Mammary epithelial cell (primary cell): ENCODE measurements at regions of chr18 and their contacts with region 1.

Region 1: DNA sequence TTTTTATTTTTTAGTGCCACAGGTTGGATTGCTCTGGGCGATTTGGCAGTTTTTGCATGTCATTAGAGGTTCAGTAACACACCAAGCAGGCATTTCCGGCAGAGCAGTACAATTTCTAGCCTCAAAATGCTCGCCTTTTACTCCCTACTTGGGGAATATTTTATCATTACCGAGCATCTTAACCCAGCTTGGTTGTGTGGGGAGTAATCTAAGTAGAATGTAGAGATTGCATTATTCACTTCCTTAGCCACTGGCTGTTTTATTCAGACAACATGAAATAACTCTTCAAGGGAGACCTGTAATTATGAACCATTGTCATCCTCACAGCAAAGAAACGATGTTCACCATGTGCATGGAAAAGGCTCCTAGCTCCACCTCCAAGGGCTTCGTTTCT is 13.1 kb downstream of the GRP start:
- DNase-seq: peak; percentile 75
- H3K4me3 ChIP-seq: no peak overlapping the region
- H3K27ac ChIP-seq: no peak overlapping the region
- H3K4me1 ChIP-seq: peaks cover 33% of the 10 kb centered on the region
- H3K27me3 ChIP-seq: no peaks in the 10 kb centered on the region
- CTCF ChIP-seq: no peak

Region 2: GRCh38 chr18:58953627-58954026 is 279.4 kb before region 1 on chr18:
- CTCF ChIA-PET with region 1: no interaction called
- dilution Hi-C with region 1: no loop called
- in situ Hi-C with region 1: no loop called
- intact Hi-C with region 1: no loop called
- DNase-seq: no peak
- H3K4me3 ChIP-seq: no peak overlapping the region
- H3K27ac ChIP-seq: no peak overlapping the region
- H3K4me1 ChIP-seq: peaks cover 3% of the 10 kb centered on the region
- H3K27me3 ChIP-seq: no peaks in the 10 kb centered on the region
- CTCF ChIP-seq: no peak

Region 3: DNA sequence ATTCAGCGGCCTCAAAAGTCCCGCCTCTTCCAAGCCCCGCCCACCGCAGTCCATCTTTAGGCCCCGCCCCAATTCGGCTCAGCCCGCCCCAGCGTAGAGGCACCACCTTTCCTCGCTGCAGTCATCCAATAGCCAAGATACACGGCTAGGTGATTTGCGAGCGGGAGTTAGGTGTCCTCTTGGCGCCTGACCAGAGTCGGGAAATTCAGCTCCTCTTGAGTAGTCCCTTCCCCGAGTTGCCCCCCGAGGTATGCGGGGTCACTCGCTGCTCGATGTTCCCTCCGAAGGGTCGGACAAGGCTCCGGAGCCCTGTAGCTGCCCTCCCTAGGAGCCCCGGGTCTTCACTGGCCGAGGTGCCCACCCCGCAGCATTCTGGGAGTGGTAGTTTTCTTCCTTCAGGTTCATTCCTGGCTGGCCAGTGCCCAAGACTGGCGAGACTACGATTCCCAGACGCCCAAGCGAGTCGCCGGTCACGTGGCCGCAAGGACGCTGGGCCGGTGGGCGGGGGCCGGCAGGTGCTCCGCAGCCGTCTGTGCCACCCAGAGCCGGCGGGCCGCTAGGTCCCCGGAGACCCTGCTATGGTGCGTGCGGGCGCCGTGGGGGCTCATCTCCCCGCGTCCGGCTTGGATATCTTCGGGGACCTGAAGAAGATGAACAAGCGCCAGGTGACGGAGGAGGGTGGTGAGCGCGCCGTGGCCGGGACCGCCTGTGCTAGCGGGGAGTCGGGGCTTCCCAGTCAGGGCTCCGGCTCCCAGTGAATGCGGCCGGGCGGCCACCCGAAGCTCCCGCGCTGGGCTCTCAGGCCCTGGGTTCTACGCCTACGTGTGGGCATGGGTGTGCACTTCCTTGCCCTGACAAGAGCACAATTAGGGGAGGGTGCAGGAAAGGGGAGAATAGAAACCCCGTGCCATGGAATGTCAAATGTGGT is 93.4 kb before region 1 on chr18 and contains the start of gene SEC11C:
- CTCF ChIA-PET with region 1: no interaction called
- dilution Hi-C with region 1: no loop called
- in situ Hi-C with region 1: no loop called
- intact Hi-C with region 1: loop called (anchors 2 kb)
- DNase-seq: peak; percentile 96
- H3K4me3 ChIP-seq: peak within 1 kb of the TSS; percentile 82 to 88 (median 85)
- H3K27ac ChIP-seq: peak within 1 kb of the TSS; percentile 96
- H3K4me1 ChIP-seq: peaks cover 6% of the 10 kb centered on the region
- H3K27me3 ChIP-seq: peaks cover 5% of the 10 kb centered on the region
- CTCF ChIP-seq: no peak
- total RNA-seq, gene SEC11C: 13.7 to 47.1 TPM